ENCODE measurements at regions of chr14 and their contacts with region 1.

Region 1: GRCh38 chr14:61598980-61599379 is 96.3 kb upstream of the HIF1A start:
- DNase-seq: peak; percentile 66
- H3K4me3 Mint-ChIP-seq: peak overlapping the region; percentile 14
- H3K27ac Mint-ChIP-seq: peak overlapping the region; percentile 80
- H3K4me1 Mint-ChIP-seq: peaks cover 48% of the 10 kb centered on the region
- H3K27me3 Mint-ChIP-seq: no peaks in the 10 kb centered on the region

Region 2: GRCh38 chr14:61188978-61189808 is 409.8 kb before region 1 on chr14:
- CTCF ChIA-PET with region 1: no interaction called
- intact Hi-C with region 1: loop called (anchors 10 kb)
- DNase-seq: peak; percentile 76
- H3K4me3 Mint-ChIP-seq: peak overlapping the region; percentile 70
- H3K27ac Mint-ChIP-seq: peak overlapping the region; percentile 53
- H3K4me1 Mint-ChIP-seq: peaks cover 15% of the 10 kb centered on the region
- H3K27me3 Mint-ChIP-seq: peaks cover 36% of the 10 kb centered on the region

Region 3: DNA sequence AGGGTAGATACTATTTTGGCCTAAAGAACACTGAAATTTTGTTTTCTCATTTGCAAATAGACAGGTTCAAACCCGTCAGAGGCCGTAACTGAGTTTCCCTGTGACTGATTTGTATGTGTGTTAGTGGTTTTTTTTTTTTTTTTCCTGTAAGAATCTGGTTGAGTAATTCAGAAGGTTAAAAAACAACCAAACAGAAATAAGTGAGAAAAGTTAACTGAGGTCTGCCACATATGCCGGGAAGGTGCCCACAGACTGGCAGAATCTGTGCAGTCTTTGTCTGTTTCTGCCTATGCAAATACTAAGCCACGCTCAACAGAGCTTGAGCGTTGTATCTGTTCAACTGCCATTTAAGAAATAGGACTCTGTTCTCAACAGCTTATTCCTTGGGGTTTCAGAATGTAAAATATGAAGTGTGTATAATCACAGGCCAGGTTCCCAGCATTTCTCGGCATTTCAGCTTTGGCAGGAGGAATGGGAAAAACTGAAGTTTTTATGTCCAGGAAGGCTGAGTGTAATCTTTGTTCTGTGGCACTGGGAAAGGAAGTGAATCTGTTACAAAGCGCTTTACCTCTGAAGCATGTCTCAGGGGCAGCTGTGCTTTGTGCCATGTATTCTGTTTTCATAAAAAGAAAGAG is 95.7 kb before region 1 on chr14:
- CTCF ChIA-PET with region 1: no interaction called
- intact Hi-C with region 1: loop called (anchors 1 kb)
- DNase-seq: peak; percentile 92
- H3K4me3 Mint-ChIP-seq: peak overlapping the region; percentile 66
- H3K27ac Mint-ChIP-seq: peak overlapping the region; percentile 100
- H3K4me1 Mint-ChIP-seq: peaks cover 97% of the 10 kb centered on the region
- H3K27me3 Mint-ChIP-seq: no peaks in the 10 kb centered on the region

Region 4: GRCh38 chr14:61537563-61538463 is 61.2 kb before region 1 on chr14:
- CTCF ChIA-PET with region 1: no interaction called
- intact Hi-C with region 1: loop called (anchors 1 kb)
- DNase-seq: peak; percentile 79
- H3K4me3 Mint-ChIP-seq: no peak overlapping the region
- H3K27ac Mint-ChIP-seq: peak overlapping the region; percentile 92
- H3K4me1 Mint-ChIP-seq: peaks cover 84% of the 10 kb centered on the region
- H3K27me3 Mint-ChIP-seq: no peaks in the 10 kb centered on the region

Region 5: DNA sequence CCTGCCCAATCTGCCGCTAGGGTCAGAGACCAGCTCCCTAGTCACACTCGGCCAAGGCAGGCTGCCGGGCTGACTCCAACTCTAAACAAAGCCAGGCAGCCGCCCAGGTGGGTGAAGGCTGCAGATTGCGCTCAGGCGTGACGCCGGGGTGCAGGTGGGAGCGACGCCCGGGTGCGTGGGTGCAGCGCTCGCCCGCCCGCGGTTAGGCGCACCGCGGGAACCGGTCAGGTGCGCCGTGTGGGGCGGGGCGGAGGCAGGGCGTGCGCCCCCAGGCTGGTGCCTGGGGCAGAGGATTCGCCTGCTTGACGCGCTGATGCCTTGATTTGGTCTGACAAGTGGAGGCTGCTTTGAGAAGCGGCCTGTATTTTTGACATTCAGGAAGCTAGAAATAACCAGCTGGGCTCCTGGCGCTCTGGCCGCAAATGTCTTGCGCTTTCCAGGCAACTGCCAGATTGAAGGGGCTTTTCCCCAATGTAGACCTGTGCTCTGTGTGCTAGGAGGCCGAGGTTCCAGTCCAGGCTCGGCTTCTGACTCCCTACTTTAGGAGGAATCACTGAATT is 30.3 kb before region 1 on chr14:
- CTCF ChIA-PET with region 1: no interaction called
- intact Hi-C with region 1: loop called (anchors 1 kb)
- DNase-seq: peak; percentile 71
- H3K4me3 Mint-ChIP-seq: peak overlapping the region; percentile 73
- H3K27ac Mint-ChIP-seq: peak overlapping the region; percentile 91
- H3K4me1 Mint-ChIP-seq: peaks cover 87% of the 10 kb centered on the region
- H3K27me3 Mint-ChIP-seq: no peaks in the 10 kb centered on the region

Region 6: DNA sequence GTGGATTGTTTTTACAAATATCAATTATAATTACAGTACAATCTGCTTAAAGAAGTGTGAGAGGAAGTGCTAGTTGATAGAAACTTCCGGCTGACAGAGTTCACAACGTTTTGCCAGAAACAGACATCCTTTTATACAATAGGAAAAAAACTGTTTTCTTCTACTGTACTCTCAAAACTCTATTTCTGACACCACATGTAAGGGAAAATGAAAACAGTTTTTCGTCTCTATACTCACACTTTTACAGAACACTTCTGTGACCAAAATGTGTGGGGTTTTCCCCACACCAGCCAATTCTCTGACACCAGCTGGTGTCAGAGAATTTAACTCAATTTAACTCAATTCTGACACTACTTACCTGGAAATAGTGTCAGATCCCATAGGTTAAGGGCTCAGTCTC is 72.1 kb after region 1 on chr14:
- CTCF ChIA-PET with region 1: no interaction called
- intact Hi-C with region 1: loop called (anchors 1 kb)
- DNase-seq: peak; percentile 69
- H3K4me3 Mint-ChIP-seq: peak overlapping the region; percentile 35
- H3K27ac Mint-ChIP-seq: no peak overlapping the region
- H3K4me1 Mint-ChIP-seq: peaks cover 25% of the 10 kb centered on the region
- H3K27me3 Mint-ChIP-seq: no peaks in the 10 kb centered on the region